Pancreas (tissue), 10 donors: ENCODE measurements at regions of chr14 and their contacts with region 1.

Region 1: DNA sequence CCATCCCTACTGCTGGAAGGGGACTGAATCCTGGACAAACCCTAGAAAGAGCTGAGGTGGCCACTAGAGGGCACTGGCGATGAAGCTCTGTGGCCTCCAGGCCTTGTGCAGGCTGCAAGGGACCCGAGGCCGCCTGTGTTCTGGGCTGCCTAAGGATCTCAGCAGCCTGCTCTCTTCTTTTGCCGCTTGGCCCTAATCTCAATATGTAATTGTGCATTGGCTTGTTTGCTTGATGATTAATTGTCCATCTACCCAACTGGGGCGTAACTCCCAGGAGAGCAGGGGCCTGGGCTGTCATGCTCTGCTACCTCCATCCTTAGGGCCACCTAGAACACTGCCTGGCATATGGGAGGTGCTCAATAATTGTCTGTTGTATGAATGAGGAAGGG is 73.8 kb downstream of the SYNE3 start:
- DNase-seq: peak in 5 of 6 donors; percentile 55 to 87 (median 77)
- ATAC-seq: peak; percentile 89 to 99 (median 97)
- H3K4me3 ChIP-seq: no peak overlapping the region
- H3K27ac ChIP-seq: no peak overlapping the region
- H3K4me1 ChIP-seq: no peaks in the 10 kb centered on the region
- H3K27me3 ChIP-seq: no peaks in the 10 kb centered on the region
- CTCF ChIP-seq: peak; percentile 59 to 87 (median 81)

Region 2: DNA sequence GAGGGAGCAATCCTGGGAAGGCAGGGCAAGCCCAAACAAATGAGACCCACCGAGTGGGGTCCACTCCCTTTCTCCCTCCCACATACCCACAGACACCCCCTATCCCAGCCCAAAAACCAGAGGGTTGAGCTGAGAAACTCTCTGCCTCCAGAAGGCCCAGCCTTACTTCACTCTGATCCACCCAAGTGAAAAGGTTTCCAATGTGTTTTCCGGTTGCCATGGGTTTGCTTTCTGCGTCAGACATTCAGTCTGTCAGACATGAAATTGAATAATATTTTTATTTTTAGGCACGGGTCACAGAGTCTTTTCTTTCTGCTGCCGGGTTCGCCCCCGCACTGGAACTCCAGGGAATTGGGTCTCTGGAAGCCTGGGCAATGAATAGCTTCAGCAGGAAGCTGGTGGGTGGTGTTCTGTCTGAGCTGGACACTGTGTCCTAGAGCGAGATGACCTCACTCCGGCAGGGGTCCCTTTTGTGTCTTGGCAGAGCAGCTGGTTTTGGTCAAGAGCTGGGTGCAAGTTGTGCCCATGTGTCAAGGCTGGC is 53.1 kb before region 1 on chr14:
- intact Hi-C with region 1: no loop called
- DNase-seq: peak in 2 of 6 donors; percentile 22 to 36
- ATAC-seq: peak; percentile 28 to 58 (median 44)
- H3K4me3 ChIP-seq: no peak overlapping the region
- H3K27ac ChIP-seq: no peak overlapping the region
- H3K4me1 ChIP-seq: no peaks in the 10 kb centered on the region
- H3K27me3 ChIP-seq: no peaks in the 10 kb centered on the region
- CTCF ChIP-seq: no peak

Region 3: DNA sequence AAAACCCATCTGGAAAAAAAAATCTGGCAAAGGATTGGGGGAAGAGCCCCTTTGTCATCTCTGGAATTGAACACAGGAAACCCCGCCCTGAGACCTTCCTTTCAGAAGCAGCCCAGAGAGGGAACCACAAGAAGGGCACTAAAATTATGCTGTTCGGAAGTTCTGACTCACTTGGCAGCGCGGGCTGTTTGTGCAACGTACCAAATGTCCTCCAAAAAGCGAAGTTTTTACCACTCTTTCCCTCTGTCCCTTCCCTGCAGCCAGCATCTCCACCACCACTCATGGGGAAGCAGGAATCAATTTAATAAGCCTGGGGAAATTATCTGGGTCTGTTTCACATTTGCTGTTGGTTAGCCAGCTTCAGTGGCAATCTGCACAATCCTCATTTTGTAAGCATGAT is 77.1 kb after region 1 on chr14:
- intact Hi-C with region 1: loop called in 1 of 3 experiments (anchors 5 kb)
- DNase-seq: no peak
- ATAC-seq: peak in 2 of 4 donors; percentile 6 to 24
- H3K4me3 ChIP-seq: no peak overlapping the region
- H3K27ac ChIP-seq: no peak overlapping the region
- H3K4me1 ChIP-seq: peaks cover 4 to 16% (median 13%) of the 10 kb centered on the region in 3 donors
- H3K27me3 ChIP-seq: no peaks in the 10 kb centered on the region
- CTCF ChIP-seq: no peak

Region 4: GRCh38 chr14:95527387-95528002 is 84.9 kb after region 1 on chr14:
- intact Hi-C with region 1: loop called in 2 of 3 experiments (anchors 5 kb)
- DNase-seq: no peak
- ATAC-seq: peak in 3 of 4 donors; percentile 46 to 61 (median 57)
- H3K4me3 ChIP-seq: no peak overlapping the region
- H3K27ac ChIP-seq: peak overlapping the region in 1 of 4 donors; percentile 2
- H3K4me1 ChIP-seq: peaks cover 0 to 30% (median 24%) of the 10 kb centered on the region in 3 donors
- H3K27me3 ChIP-seq: no peaks in the 10 kb centered on the region
- CTCF ChIP-seq: peak; percentile 28 to 61 (median 54)